Mammary epithelial cell (primary cell): ENCODE measurements at regions of chr2 and their contacts with region 1.

Region 1: GRCh38 chr2:99154643-99155536 is at the starts of genes LIPT1 and TSGA10:
- DNase-seq: peak; percentile 89
- H3K4me3 ChIP-seq: peak within 1 kb of the TSS; percentile 75 to 82 (median 78)
- H3K27ac ChIP-seq: peak within 1 kb of the TSS; percentile 78
- H3K4me1 ChIP-seq: peaks cover 11% of the 10 kb centered on the region
- H3K27me3 ChIP-seq: no peaks in the 10 kb centered on the region
- CTCF ChIP-seq: peak in 1 of 2 donors; percentile 24
- total RNA-seq, gene LIPT1: 3.7 to 4.4 TPM
- total RNA-seq, gene TSGA10: 5.7 to 6.0 TPM

Region 2: GRCh38 chr2:98608116-98608999 is 546.5 kb before region 1 on chr2 and contains the starts of genes COA5 and UNC50:
- CTCF ChIA-PET with region 1: no interaction called
- dilution Hi-C with region 1: no loop called
- in situ Hi-C with region 1: no loop called
- intact Hi-C with region 1: loop called (anchors 10 kb)
- DNase-seq: peak; percentile 88
- H3K4me3 ChIP-seq: peak within 1 kb of the TSS; percentile 77 to 92 (median 91)
- H3K27ac ChIP-seq: peak within 1 kb of the TSS; percentile 89
- H3K4me1 ChIP-seq: peaks cover 22% of the 10 kb centered on the region
- H3K27me3 ChIP-seq: no peaks in the 10 kb centered on the region
- CTCF ChIP-seq: peak in 1 of 2 donors; percentile 10
- total RNA-seq, gene COA5: 16.5 to 20.5 TPM
- total RNA-seq, gene UNC50: 33.0 to 38.4 TPM

Region 3: DNA sequence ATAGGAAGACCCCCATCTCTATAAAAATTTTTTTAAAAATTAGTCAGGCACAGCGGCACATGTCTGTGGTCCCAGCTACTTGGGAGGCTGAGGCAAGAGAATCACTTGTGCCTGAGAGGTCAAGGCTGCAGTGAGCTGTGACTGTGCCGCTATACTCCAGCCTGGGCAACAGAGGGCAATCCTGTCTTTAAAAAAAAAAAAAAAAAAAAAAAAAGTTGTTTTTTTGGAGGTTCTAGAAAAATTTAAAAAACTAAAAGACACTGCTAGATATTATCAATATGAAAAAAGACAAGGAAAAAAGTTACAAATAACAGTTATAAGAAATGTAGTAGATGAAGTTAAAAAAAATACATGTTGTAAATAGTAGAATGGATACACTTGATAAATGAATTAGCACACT is 69.5 kb before region 1 on chr2:
- CTCF ChIA-PET with region 1: no interaction called
- dilution Hi-C with region 1: no loop called
- in situ Hi-C with region 1: no loop called
- intact Hi-C with region 1: no loop called
- DNase-seq: peak; percentile 5
- H3K4me3 ChIP-seq: no peak overlapping the region
- H3K27ac ChIP-seq: no peak overlapping the region
- H3K4me1 ChIP-seq: no peaks in the 10 kb centered on the region
- H3K27me3 ChIP-seq: no peaks in the 10 kb centered on the region
- CTCF ChIP-seq: peak; percentile 29 to 50

Region 4: DNA sequence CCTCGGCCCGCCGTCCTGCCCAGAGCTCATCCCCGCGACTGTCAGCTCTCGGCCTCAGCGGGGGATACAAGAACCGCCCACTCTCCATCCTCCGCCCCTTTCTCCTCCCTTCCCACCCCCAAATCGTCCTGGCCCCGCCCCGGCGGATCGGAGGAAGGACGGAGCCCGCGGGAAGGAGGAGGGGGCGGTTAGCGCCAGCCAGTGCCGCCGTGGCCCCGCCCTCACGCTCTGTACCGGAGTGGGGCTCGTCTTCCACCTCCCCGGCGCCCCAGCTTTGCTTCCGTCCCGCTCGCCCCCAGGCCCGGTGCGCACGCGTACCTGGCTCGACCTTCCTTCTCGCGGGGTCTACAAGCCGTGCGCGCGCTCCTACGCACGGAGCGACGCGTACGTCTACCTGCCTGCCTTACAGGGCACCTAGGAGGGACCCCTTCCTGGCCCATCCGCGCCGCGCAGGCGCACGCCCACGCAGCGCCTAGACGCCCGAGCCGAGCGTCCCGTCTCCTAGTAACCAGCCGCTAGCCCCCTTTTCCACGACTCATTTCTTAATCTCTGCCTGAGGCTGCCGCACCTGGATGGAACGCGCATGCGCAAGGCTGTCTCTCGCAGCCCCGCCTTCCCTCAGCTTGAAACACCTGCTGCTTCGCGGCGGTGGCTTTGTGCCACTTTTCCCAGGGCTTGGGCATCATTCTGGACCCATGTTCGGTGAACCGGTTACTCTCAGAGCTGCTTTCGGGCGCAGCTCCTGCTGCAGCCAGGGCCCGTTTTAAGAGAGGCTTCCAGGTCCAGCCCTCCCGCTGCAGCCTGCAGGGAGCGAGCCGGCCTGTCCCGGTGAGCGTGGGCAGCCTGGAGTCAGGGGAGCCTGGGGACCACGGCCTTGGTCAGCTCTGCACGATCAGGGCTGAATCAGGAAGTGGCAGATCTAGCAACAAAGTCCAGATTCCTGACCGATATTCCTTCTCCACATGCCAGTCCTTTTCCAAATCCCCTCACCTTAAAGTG is 13.5 kb before region 1 on chr2 and contains the start of gene C2orf15:
- CTCF ChIA-PET with region 1: no interaction called
- dilution Hi-C with region 1: no loop called
- in situ Hi-C with region 1: no loop called
- intact Hi-C with region 1: loop called (anchors 2 kb)
- DNase-seq: peak; percentile 97
- H3K4me3 ChIP-seq: peak within 1 kb of the TSS; percentile 66 to 84 (median 83)
- H3K27ac ChIP-seq: peak within 1 kb of the TSS; percentile 62
- H3K4me1 ChIP-seq: peaks cover 12% of the 10 kb centered on the region
- H3K27me3 ChIP-seq: no peaks in the 10 kb centered on the region
- CTCF ChIP-seq: no peak
- total RNA-seq, gene C2orf15: 1.1 to 2.0 TPM

Region 5: DNA sequence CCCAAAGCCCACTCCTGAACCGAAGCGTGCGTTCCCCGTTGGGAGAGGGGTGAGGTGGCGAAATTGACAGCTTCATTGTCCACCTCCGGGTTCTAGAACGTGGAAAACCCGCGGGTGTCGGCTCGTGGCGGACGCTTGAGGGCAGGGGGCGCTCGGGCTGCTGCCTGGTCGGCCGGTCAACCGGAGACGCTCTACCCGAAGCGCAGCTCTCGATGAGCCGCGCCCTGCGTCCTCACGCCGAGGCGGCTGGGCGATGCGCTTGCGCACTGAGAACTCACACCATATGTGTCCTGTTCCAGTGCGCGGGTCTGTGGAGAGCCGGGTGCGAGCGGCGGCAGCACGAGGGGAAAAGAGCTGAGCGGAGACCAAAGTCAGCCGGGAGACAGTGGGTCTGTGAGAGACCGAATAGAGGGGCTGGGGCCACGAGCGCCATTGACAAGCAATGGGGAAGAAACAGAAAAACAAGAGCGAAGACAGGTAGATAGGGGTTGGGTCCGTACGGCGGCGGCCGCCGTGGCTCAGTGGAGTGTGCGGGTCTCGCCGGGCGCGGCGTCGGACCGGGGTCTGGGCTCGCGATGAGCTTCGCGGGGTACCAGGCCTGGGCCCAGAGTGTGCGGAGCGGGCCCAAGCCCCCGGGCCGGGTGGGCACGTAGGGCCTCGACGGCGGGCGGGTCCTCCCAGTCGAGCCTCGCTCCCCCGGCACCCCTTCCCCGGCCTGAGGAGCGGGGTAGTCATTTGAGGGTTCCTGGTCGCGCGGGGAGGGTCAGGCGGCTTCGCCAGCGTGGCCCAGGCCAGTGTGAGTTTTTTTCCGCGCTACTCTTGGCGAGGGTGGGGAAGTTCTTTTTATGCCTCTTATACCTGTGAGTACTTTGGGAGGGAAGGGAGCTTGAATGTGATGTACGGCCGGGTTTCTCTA is 182.5 kb after region 1 on chr2 and contains the start of gene EIF5B:
- CTCF ChIA-PET with region 1: no interaction called
- dilution Hi-C with region 1: no loop called
- in situ Hi-C with region 1: no loop called
- intact Hi-C with region 1: loop called (anchors 10 kb)
- DNase-seq: peak; percentile 94
- H3K4me3 ChIP-seq: peak within 1 kb of the TSS; percentile 69 to 93 (median 86)
- H3K27ac ChIP-seq: peak within 1 kb of the TSS; percentile 87
- H3K4me1 ChIP-seq: peaks cover 27% of the 10 kb centered on the region
- H3K27me3 ChIP-seq: no peaks in the 10 kb centered on the region
- CTCF ChIP-seq: peak; percentile 17 to 75
- total RNA-seq, gene EIF5B: 19.5 to 64.1 TPM

Region 6: GRCh38 chr2:99468155-99468554 is 313.3 kb after region 1 on chr2:
- CTCF ChIA-PET with region 1: no interaction called
- dilution Hi-C with region 1: no loop called
- in situ Hi-C with region 1: no loop called
- intact Hi-C with region 1: no loop called
- DNase-seq: no peak
- H3K4me3 ChIP-seq: no peak overlapping the region
- H3K27ac ChIP-seq: no peak overlapping the region
- H3K4me1 ChIP-seq: peaks cover 15% of the 10 kb centered on the region
- H3K27me3 ChIP-seq: no peaks in the 10 kb centered on the region
- CTCF ChIP-seq: no peak